ENCODE measurements at regions of chr16 and their contacts with region 1.

Region 1: GRCh38 chr16:86664533-86665318 is 86.4 kb downstream of the FOXL1 start:
- DNase-seq: peak; percentile 87
- H3K4me3 Mint-ChIP-seq: peak overlapping the region; percentile 49
- H3K27ac Mint-ChIP-seq: peak overlapping the region; percentile 99
- H3K4me1 Mint-ChIP-seq: peaks cover 45% of the 10 kb centered on the region
- H3K27me3 Mint-ChIP-seq: no peaks in the 10 kb centered on the region
- CTCF ChIP-seq: no peak

Region 2: GRCh38 chr16:86631441-86631840 is 33.3 kb before region 1 on chr16:
- CTCF ChIA-PET with region 1: interaction called, 3 read pairs
- intact Hi-C with region 1: loop called (anchors 2 kb)
- DNase-seq: peak; percentile 63
- H3K4me3 Mint-ChIP-seq: no peak overlapping the region
- H3K27ac Mint-ChIP-seq: peak overlapping the region; percentile 56
- H3K4me1 Mint-ChIP-seq: peaks cover 33% of the 10 kb centered on the region
- H3K27me3 Mint-ChIP-seq: no peaks in the 10 kb centered on the region
- CTCF ChIP-seq: no peak

Region 3: GRCh38 chr16:86734543-86735480 is 70.1 kb after region 1 on chr16:
- CTCF ChIA-PET with region 1: interaction called, 4 read pairs
- intact Hi-C with region 1: loop called (anchors 1 kb)
- DNase-seq: peak; percentile 56
- H3K4me3 Mint-ChIP-seq: peak overlapping the region; percentile 67
- H3K27ac Mint-ChIP-seq: peak overlapping the region; percentile 95
- H3K4me1 Mint-ChIP-seq: peaks cover 49% of the 10 kb centered on the region
- H3K27me3 Mint-ChIP-seq: no peaks in the 10 kb centered on the region
- CTCF ChIP-seq: no peak

Region 4: DNA sequence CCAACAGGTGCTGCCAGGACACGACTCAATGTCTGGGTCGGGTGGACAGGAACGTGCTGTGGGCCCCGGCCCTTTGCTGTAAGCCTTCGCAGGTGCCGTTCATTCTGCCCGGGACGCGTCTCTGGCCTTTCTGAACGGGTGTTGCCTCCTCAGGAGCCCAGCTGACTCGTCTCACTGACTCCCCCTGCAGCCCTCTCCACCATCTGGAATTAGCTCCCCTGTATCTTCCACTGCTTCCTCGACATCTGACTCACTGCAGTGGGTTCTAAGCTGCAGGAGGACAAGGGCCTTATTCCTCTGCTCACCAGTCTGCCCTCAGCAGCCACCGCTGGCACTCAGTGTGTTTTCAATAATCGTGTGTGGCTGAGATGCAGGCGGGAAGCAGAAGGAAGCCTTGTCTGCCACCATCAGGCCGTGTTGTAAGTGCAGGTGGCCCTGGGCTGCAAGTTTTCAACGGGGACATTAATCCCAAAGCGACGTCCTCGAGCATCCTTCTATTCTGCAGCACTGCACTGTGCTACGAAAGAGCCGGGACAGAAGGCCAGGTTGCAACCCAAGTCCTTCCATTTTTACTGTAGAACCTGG is 169.8 kb after region 1 on chr16:
- CTCF ChIA-PET with region 1: interaction called, 6 read pairs
- intact Hi-C with region 1: loop called (anchors 10 kb)
- DNase-seq: peak; percentile 70
- H3K4me3 Mint-ChIP-seq: no peak overlapping the region
- H3K27ac Mint-ChIP-seq: no peak overlapping the region
- H3K4me1 Mint-ChIP-seq: peaks cover 11% of the 10 kb centered on the region
- H3K27me3 Mint-ChIP-seq: peaks cover 17% of the 10 kb centered on the region
- CTCF ChIP-seq: peak; percentile 64